ENCODE measurements at regions of chr9 and their contacts with region 1.

Region 1: GRCh38 chr9:36407122-36407723 is 7.2 kb upstream of the RNF38 start:
- DNase-seq: peak; percentile 63
- ATAC-seq: peak; percentile 96
- H3K4me3 ChIP-seq: no peak overlapping the region
- H3K27ac ChIP-seq: no peak overlapping the region; the same call in 1 of the 2 replicates
- H3K4me1 ChIP-seq: peaks cover 8% of the 10 kb centered on the region; the same call in 1 of the 2 replicates
- H3K27me3 ChIP-seq: no peaks in the 10 kb centered on the region
- CTCF ChIP-seq: peak; percentile 99

Region 2: DNA sequence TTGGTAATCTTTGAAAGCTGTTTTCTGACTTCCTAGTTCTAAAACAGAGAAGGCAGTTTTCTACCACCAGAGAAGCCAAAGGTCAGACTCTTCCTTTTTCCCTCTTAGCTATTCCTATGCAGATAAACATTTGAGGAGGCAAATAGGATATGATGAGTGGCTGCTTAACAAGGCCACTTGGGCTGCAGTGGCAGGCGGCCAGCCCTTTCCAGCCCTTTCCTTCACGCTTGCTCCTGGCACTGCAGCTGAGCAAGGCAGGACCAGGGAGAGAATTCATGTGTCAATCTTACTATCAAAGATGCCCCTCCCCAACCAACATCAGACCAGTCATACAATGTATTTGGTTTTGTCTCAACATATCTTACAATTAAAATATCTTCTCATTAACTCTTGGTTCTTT is 29.7 kb after region 1 on chr9:
- CTCF ChIA-PET with region 1: interaction called, 13 read pairs
- POLR2A ChIA-PET with region 1: no interaction called
- in situ Hi-C with region 1: no loop called
- intact Hi-C with region 1: no loop called
- DNase-seq: no peak
- ATAC-seq: no peak
- H3K4me3 ChIP-seq: no peak overlapping the region
- H3K27ac ChIP-seq: no peak overlapping the region
- H3K4me1 ChIP-seq: no peaks in the 10 kb centered on the region
- H3K27me3 ChIP-seq: no peaks in the 10 kb centered on the region
- CTCF ChIP-seq: no peak

Region 3: GRCh38 chr9:36450110-36450732 is 43.0 kb after region 1 on chr9:
- CTCF ChIA-PET with region 1: interaction called, 49 read pairs
- POLR2A ChIA-PET with region 1: no interaction called
- in situ Hi-C with region 1: no loop called
- intact Hi-C with region 1: loop called (anchors 1 kb)
- DNase-seq: peak; percentile 20
- ATAC-seq: peak; percentile 60; the same call in 1 of the 2 replicates
- H3K4me3 ChIP-seq: no peak overlapping the region
- H3K27ac ChIP-seq: no peak overlapping the region
- H3K4me1 ChIP-seq: no peaks in the 10 kb centered on the region
- H3K27me3 ChIP-seq: no peaks in the 10 kb centered on the region
- CTCF ChIP-seq: no peak

Region 4: GRCh38 chr9:36487482-36488388 is 80.5 kb after region 1 on chr9:
- CTCF ChIA-PET with region 1: interaction called, 10 read pairs
- POLR2A ChIA-PET with region 1: no interaction called
- in situ Hi-C with region 1: no loop called
- intact Hi-C with region 1: no loop called
- DNase-seq: peak; percentile 47
- ATAC-seq: peak; percentile 96
- H3K4me3 ChIP-seq: peak overlapping the region; percentile 73 to 90
- H3K27ac ChIP-seq: peak overlapping the region; percentile 98
- H3K4me1 ChIP-seq: peaks cover 18% of the 10 kb centered on the region
- H3K27me3 ChIP-seq: no peaks in the 10 kb centered on the region
- CTCF ChIP-seq: no peak

Region 5: DNA sequence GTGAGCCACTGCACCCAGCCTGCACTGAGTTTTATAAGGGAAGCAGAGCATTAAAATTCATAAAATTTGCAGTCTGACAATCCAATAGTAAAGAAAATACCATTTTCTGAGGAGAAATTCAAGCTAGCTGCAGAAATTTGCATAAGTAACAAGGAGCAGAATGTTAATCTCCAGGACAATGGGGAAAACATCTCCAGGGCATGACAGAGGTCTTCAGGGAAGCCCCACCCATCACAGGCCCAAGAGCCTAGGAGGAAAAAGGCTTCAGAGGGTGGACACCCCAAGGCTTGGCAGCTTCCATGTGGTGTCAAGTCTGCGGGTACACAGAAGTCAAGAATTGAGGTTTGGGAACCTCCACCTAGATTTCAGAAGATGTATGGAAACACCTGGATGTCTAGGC is 127.9 kb after region 1 on chr9:
- CTCF ChIA-PET with region 1: interaction called, 12 read pairs
- POLR2A ChIA-PET with region 1: no interaction called
- in situ Hi-C with region 1: no loop called
- intact Hi-C with region 1: no loop called
- DNase-seq: no peak
- ATAC-seq: no peak
- H3K4me3 ChIP-seq: no peak overlapping the region
- H3K27ac ChIP-seq: no peak overlapping the region
- H3K4me1 ChIP-seq: no peaks in the 10 kb centered on the region
- H3K27me3 ChIP-seq: no peaks in the 10 kb centered on the region
- CTCF ChIP-seq: no peak

Region 6: GRCh38 chr9:36551129-36551528 is 143.9 kb after region 1 on chr9:
- CTCF ChIA-PET with region 1: interaction called, 92 read pairs
- POLR2A ChIA-PET with region 1: no interaction called
- in situ Hi-C with region 1: no loop called
- intact Hi-C with region 1: loop called (anchors 1 kb)
- DNase-seq: no peak
- ATAC-seq: no peak
- H3K4me3 ChIP-seq: no peak overlapping the region
- H3K27ac ChIP-seq: no peak overlapping the region
- H3K4me1 ChIP-seq: no peaks in the 10 kb centered on the region
- H3K27me3 ChIP-seq: no peaks in the 10 kb centered on the region
- CTCF ChIP-seq: no peak

Region 7: GRCh38 chr9:36560857-36561221 is 153.6 kb after region 1 on chr9:
- CTCF ChIA-PET with region 1: interaction called, 92 read pairs
- POLR2A ChIA-PET with region 1: interaction called, 5 read pairs
- in situ Hi-C with region 1: no loop called
- intact Hi-C with region 1: loop called (anchors 1 kb)
- DNase-seq: no peak
- ATAC-seq: no peak
- H3K4me3 ChIP-seq: no peak overlapping the region
- H3K27ac ChIP-seq: no peak overlapping the region
- H3K4me1 ChIP-seq: no peaks in the 10 kb centered on the region
- H3K27me3 ChIP-seq: no peaks in the 10 kb centered on the region
- CTCF ChIP-seq: no peak

Region 8: GRCh38 chr9:36913393-36914211 is 506.4 kb after region 1 on chr9:
- CTCF ChIA-PET with region 1: no interaction called
- POLR2A ChIA-PET with region 1: no interaction called
- in situ Hi-C with region 1: no loop called
- intact Hi-C with region 1: no loop called
- DNase-seq: no peak
- ATAC-seq: peak; percentile 55
- H3K4me3 ChIP-seq: no peak overlapping the region
- H3K27ac ChIP-seq: no peak overlapping the region
- H3K4me1 ChIP-seq: peaks cover 12% of the 10 kb centered on the region; the same call in 1 of the 2 replicates
- H3K27me3 ChIP-seq: no peaks in the 10 kb centered on the region
- CTCF ChIP-seq: no peak

Region 9: DNA sequence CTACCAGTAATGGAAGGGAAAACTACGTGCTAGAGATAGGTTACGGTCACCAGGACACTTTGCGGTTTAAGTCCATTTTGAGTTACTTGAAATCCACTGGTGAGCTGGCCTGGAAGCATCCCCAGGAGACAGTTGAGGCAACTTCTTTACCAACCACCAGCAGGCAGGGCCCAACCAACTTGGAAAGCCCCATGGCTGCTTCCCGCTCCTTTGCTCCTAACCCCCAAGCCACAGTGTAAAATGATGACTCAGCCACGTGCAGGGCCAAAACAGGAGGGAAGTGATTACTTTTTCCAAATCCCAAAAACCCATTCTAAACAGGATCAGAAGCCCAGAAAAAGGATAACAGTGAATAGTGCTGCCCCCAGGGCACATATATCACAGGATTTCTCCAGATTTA is 539.4 kb after region 1 on chr9:
- CTCF ChIA-PET with region 1: no interaction called
- POLR2A ChIA-PET with region 1: no interaction called
- in situ Hi-C with region 1: no loop called
- intact Hi-C with region 1: no loop called
- DNase-seq: no peak
- ATAC-seq: no peak
- H3K4me3 ChIP-seq: no peak overlapping the region
- H3K27ac ChIP-seq: no peak overlapping the region
- H3K4me1 ChIP-seq: no peaks in the 10 kb centered on the region; the same call in 1 of the 2 replicates
- H3K27me3 ChIP-seq: peaks cover 4% of the 10 kb centered on the region; the same call in 1 of the 2 replicates
- CTCF ChIP-seq: no peak

Measured in Panc1 (cell line).